IMR-90 (cell line): ENCODE measurements at regions of chr3 and their contacts with region 1.

Region 1: GRCh38 chr3:105938101-105938500 is 69.3 kb upstream of the CBLB start:
- DNase-seq: peak; percentile 45
- ATAC-seq: peak; percentile 85
- H3K4me3 ChIP-seq: peak overlapping the region; percentile 34; the same call in 1 of the 2 replicates
- H3K27ac ChIP-seq: peak overlapping the region; percentile 5; the same call in 1 of the 2 replicates
- H3K4me1 ChIP-seq: no peaks in the 10 kb centered on the region
- H3K27me3 ChIP-seq: no peaks in the 10 kb centered on the region
- CTCF ChIP-seq: no peak
- POLR2A ChIP-seq: no peak
- RAD21 ChIP-seq: no peak

Region 2: DNA sequence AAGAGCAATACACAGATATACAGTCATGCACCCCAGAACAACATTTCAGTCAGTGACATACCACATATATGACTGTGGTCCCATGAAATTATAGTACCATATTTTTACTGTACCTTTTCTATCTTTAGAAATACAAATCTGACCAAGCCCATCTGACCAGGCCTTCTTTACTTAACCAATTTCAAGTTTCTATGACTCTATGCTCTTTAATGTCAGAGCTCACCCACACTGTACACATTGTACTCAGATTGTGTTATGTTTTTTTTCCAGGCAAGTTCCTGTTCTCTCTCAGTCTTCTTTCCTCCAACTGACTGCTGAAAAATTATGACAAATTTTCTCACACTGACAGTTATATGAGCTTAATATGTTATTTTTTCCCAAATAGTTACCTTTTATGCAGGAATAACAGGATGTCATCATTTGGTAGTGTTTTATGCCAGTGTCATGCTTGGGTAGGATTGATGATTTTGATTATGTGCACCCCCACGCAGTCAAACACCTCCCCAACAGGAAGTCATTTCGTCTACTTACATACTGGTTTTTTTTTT is 61.2 kb before region 1 on chr3:
- CTCF ChIA-PET with region 1: no interaction called
- POLR2A ChIA-PET with region 1: no interaction called
- dilution Hi-C with region 1: no loop called
- in situ Hi-C with region 1: no loop called
- intact Hi-C with region 1: loop called (anchors 10 kb)
- DNase-seq: no peak
- ATAC-seq: no peak
- H3K4me3 ChIP-seq: no peak overlapping the region
- H3K27ac ChIP-seq: no peak overlapping the region
- H3K4me1 ChIP-seq: peaks cover 3% of the 10 kb centered on the region; the same call in 1 of the 2 replicates
- H3K27me3 ChIP-seq: no peaks in the 10 kb centered on the region
- CTCF ChIP-seq: no peak
- POLR2A ChIP-seq: no peak
- RAD21 ChIP-seq: no peak

Region 3: DNA sequence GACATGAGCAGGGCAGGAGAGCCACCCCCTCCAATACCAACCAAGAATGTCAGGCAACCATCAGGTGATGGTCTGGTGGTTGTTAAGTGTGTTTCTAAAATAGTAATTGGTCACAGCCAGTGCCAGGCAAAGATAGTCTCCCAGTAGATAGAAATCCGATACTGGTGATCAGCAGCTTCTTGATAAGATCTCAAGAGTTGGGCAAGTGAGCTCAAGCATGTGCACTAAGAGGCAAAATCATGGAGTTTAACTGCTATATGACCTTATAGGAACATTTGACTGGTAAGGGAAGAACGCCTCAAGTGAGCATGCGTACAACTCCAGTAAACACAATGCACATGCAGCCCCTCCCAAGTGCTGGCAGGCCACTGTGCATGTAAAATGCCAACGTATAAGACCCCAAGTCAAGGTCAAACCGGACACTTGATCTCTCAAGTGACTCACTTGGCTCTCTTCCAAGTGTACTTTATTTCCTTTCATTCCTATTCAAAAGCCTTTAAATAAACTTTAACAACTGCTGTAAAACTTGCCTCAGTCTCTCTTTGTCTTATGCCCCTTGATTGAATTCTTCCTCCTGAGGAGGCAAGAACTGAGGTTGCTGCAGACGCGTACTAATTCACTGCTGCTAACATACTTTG is 33.3 kb before region 1 on chr3:
- CTCF ChIA-PET with region 1: no interaction called
- POLR2A ChIA-PET with region 1: no interaction called
- dilution Hi-C with region 1: no loop called
- in situ Hi-C with region 1: no loop called
- intact Hi-C with region 1: loop called (anchors 5 kb)
- DNase-seq: peak; percentile 23
- ATAC-seq: no peak
- H3K4me3 ChIP-seq: no peak overlapping the region
- H3K27ac ChIP-seq: no peak overlapping the region
- H3K4me1 ChIP-seq: peaks cover 5% of the 10 kb centered on the region; the same call in 1 of the 2 replicates
- H3K27me3 ChIP-seq: no peaks in the 10 kb centered on the region
- CTCF ChIP-seq: no peak
- POLR2A ChIP-seq: no peak
- RAD21 ChIP-seq: no peak

Region 4: DNA sequence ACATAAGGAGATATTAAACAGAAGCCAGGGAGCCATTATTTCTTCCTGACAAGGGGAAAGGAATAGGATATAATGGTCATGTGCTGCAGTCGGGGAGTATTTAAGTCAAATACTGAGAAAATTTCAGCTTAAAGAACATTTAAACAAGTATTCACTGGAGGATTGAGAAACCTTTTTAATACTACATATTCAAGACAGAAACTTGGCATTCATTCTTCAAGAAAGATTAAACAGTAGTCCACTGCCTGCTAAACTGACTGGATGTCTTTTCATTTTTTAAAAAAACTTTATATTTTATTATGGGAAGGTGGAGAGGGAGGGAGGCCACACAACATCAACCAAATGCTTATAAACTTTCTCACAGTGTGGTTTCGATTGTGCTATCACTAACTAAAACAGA is 38.1 kb after region 1 on chr3:
- CTCF ChIA-PET with region 1: no interaction called
- POLR2A ChIA-PET with region 1: no interaction called
- dilution Hi-C with region 1: no loop called
- in situ Hi-C with region 1: no loop called
- intact Hi-C with region 1: no loop called
- DNase-seq: peak; percentile 20
- ATAC-seq: peak; percentile 48
- H3K4me3 ChIP-seq: no peak overlapping the region
- H3K27ac ChIP-seq: no peak overlapping the region
- H3K4me1 ChIP-seq: peaks cover 3% of the 10 kb centered on the region; the same call in 1 of the 2 replicates
- H3K27me3 ChIP-seq: no peaks in the 10 kb centered on the region
- CTCF ChIP-seq: no peak
- POLR2A ChIP-seq: no peak
- RAD21 ChIP-seq: no peak